ENCODE measurements at regions of chr12 and their contacts with region 1.

Region 1: DNA sequence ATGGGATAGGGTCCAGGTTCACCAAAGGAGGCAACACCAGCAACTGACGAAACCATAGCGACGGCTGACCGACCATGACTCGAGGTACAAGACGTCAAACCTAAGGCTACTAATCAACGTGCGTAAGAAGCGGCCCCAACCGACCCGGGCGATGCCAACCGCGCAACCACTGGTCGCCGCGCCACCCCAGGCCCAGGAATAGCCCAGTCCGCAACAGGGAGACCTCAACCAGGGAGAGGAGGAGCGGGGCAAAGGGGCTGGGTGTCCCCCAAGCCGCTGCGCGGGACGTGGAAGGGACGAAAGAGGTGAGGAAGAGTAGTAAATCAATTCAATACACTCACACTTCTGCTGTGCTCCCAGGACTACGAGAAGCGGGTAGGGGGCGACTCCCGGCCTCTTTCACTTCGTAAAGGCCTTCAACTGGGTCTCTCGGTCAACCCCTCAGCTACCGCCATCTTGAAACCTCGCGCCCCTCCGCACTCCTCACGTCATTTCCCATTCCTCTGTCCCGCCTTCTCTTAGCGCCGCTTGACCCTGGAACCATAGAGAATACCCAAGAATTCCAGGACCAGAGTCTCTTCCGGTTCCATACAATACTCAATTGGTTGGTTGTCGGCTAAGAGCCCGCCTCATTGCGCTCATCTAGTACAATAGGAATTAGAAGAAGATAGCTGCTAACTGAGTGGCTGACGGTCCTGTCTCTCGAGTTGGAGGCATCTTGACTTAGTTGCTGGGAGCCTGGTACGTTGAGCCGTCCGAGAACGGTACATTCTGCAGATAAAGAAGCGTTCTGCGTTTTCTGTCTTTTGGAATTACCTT is at the starts of genes C12orf60 and WBP11:
- DNase-seq: peak; percentile 74
- ATAC-seq: peak; percentile 95
- H3K4me3 Mint-ChIP-seq: no peak within 1 kb of the TSS
- H3K27ac Mint-ChIP-seq: no peak within 1 kb of the TSS
- H3K4me1 Mint-ChIP-seq: peaks cover 17% of the 10 kb centered on the region
- H3K27me3 Mint-ChIP-seq: no peaks in the 10 kb centered on the region
- CTCF ChIP-seq: no peak
- total RNA-seq, gene C12orf60: 0.64 and 0.69 TPM in 2 replicates
- total RNA-seq, gene WBP11: 86.3 and 89.4 TPM in 2 replicates

Region 2: GRCh38 chr12:14756334-14757143 is 46.7 kb before region 1 on chr12:
- CTCF ChIA-PET with region 1: no interaction called
- POLR2A ChIA-PET with region 1: interaction called, 10 read pairs
- intact Hi-C with region 1: no loop called
- DNase-seq: no peak
- ATAC-seq: no peak
- H3K4me3 Mint-ChIP-seq: no peak overlapping the region
- H3K27ac Mint-ChIP-seq: no peak overlapping the region
- H3K4me1 Mint-ChIP-seq: peaks cover 8% of the 10 kb centered on the region
- H3K27me3 Mint-ChIP-seq: no peaks in the 10 kb centered on the region
- CTCF ChIP-seq: no peak

Region 3: DNA sequence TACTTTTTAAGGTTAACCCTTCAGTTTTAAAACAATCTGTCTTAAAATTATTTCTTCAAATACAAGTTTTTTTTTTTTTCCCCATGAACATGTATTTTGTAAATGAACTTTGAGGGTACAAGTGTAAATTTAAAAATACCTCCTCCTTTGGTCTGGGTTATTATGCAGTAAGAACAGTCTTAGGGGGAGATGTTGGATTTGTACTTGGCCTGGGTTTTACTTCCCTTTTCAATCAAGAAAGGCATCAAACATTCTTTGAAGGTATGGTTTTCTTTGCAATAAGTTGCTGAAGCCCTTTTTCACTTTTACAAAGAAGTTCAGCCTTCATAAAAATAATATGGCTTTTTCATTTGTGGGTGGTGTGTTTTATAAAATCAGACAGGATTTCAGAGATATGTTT is 20.5 kb before region 1 on chr12:
- CTCF ChIA-PET with region 1: no interaction called
- POLR2A ChIA-PET with region 1: interaction called, 10 read pairs
- intact Hi-C with region 1: no loop called
- DNase-seq: no peak
- ATAC-seq: no peak
- H3K4me3 Mint-ChIP-seq: no peak overlapping the region
- H3K27ac Mint-ChIP-seq: no peak overlapping the region
- H3K4me1 Mint-ChIP-seq: peaks cover 8% of the 10 kb centered on the region
- H3K27me3 Mint-ChIP-seq: no peaks in the 10 kb centered on the region
- CTCF ChIP-seq: no peak

Region 4: GRCh38 chr12:14858513-14858912 is 55.3 kb after region 1 on chr12:
- CTCF ChIA-PET with region 1: no interaction called
- POLR2A ChIA-PET with region 1: no interaction called
- intact Hi-C with region 1: no loop called
- DNase-seq: no peak
- ATAC-seq: peak; percentile 54
- H3K4me3 Mint-ChIP-seq: peak overlapping the region; percentile 17
- H3K27ac Mint-ChIP-seq: peak overlapping the region; percentile 79
- H3K4me1 Mint-ChIP-seq: peaks cover 37% of the 10 kb centered on the region
- H3K27me3 Mint-ChIP-seq: no peaks in the 10 kb centered on the region
- CTCF ChIP-seq: no peak

Region 5: GRCh38 chr12:15546102-15546701 is 743.0 kb after region 1 on chr12:
- CTCF ChIA-PET with region 1: no interaction called
- POLR2A ChIA-PET with region 1: no interaction called
- intact Hi-C with region 1: loop called (anchors 10 kb)
- DNase-seq: no peak
- ATAC-seq: peak; percentile 76
- H3K4me3 Mint-ChIP-seq: peak overlapping the region; percentile 87
- H3K27ac Mint-ChIP-seq: peak overlapping the region; percentile 99
- H3K4me1 Mint-ChIP-seq: peaks cover 60% of the 10 kb centered on the region
- H3K27me3 Mint-ChIP-seq: no peaks in the 10 kb centered on the region
- CTCF ChIP-seq: no peak

Region 6: DNA sequence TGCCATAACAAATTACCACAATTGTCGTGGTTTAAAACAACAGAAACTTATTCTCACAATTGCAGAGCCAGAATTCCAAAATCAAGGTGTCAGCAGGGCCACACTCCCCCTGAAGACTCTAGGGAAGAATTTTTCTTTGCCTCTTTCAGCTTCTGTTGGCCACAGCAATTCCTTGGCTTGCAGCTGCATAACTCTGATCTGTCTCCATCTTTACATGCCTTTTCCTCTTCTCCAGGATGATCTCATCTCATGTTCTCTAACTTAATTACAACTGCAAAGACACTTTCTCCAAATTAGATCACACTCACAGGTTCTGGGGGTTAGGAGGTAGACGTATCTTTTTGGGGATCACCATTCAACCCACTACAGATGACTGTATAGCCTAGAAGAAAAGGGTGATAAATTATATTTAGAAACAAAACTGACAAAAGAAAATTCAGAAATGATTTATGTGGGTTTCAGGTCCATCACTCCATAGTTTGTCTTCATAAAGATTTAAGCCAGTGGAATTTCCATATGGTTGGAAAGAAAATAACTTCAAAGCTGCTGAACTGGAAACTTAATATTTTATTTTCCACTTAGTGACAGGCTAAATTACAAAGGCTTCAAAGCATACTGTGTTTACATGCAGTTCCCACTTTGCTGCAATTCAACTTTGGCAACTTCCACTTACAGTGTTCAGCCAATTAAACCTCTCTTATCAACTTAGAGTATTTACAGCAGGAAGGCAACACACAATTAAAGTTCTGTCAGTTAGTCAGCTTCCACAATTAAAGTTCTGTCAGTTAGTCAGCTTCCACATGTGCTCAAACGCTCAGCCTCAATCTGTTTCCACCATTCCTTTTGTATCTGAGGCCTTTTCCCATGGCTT is 772.7 kb after region 1 on chr12:
- CTCF ChIA-PET with region 1: no interaction called
- POLR2A ChIA-PET with region 1: no interaction called
- intact Hi-C with region 1: loop called (anchors 5 kb)
- DNase-seq: no peak
- ATAC-seq: no peak
- H3K4me3 Mint-ChIP-seq: no peak overlapping the region
- H3K27ac Mint-ChIP-seq: no peak overlapping the region
- H3K4me1 Mint-ChIP-seq: peaks cover 10% of the 10 kb centered on the region
- H3K27me3 Mint-ChIP-seq: no peaks in the 10 kb centered on the region
- CTCF ChIP-seq: no peak